Activated CD4-positive, alpha-beta T cell treated with anti-CD3 and anti-CD28 coated beads, Interleukin-2, amount 10 ng/mL, durations not matched to agents 24 days and 14 days (primary cell): ENCODE measurements at regions of chr6 and their contacts with region 1.

Region 1: DNA sequence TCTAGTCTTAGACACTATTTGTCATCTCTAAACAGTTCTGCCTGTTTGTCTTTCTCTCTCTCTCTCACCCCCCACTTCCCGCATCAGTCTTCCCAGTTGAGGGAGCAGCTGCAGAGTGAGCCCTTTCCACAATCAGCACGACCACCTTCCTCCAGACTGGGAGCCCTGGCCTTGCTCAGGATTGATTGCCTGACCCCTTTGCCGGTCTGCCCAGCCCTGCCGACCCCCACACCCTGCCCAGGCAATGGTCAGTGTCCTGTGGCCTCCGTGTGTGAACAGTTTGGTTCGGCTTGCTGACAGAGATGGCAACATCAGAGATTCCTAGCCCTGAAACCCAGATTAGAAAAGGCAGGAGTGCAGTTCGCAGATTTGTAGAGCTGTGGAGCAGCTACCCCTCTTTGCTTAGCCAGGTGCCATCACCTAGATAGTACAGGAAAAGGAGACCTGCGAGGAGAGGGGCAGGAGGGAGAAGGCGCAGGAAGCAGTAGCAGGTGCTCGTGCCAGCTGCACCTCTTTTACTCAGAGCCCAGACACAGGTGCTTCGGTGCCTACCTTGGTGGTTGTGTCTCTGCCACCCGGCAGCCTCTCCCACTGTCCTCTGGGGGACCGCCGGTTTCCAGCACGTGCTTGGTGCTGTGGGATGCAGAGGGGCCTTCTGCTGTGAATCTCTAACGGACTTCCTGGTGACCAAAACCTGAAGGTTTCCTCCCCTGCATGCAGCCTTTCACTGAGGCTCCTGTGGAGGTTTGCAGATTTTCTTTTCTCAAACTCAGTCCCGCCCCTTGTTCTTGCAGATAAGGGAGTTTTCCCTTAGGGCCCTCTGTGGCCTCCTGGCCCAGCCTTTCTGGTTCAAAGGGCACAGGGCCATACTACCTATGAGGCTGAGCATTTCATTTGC is 92.4 kb downstream of the SCML4 start:
- DNase-seq: peak; percentile 69
- H3K4me3 Mint-ChIP-seq: peak overlapping the region; percentile 88
- H3K27ac Mint-ChIP-seq: peak overlapping the region; percentile 73
- H3K4me1 Mint-ChIP-seq: peaks cover 68% of the 10 kb centered on the region
- H3K27me3 Mint-ChIP-seq: peaks cover 4% of the 10 kb centered on the region

Region 2: DNA sequence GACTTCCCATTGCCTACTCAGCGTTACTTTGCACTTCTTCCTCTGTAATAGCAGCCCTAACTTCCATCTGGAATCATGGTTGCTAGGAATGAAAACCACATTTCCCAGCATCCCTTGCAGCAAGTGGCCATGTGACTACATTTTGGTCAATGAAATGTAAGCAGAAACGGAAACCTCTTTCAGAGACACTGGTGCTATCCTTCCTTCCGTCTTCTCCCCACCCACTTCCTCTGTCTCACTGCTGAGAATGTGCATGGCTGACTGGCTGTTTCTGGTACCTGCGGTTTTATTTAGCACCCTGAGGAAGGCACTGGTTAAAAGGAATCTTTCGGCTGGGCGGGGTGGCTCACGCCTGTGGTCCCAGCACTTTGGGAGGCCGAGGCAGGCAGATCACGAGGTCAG is 15.0 kb before region 1 on chr6:
- intact Hi-C with region 1: loop called (anchors 1 kb)
- DNase-seq: peak; percentile 93
- H3K4me3 Mint-ChIP-seq: peak overlapping the region; percentile 71
- H3K27ac Mint-ChIP-seq: peak overlapping the region; percentile 85
- H3K4me1 Mint-ChIP-seq: peaks cover 52% of the 10 kb centered on the region
- H3K27me3 Mint-ChIP-seq: no peaks in the 10 kb centered on the region

Region 3: GRCh38 chr6:107786709-107787588 is 55.3 kb after region 1 on chr6:
- intact Hi-C with region 1: loop called (anchors 10 kb)
- DNase-seq: peak; percentile 86
- H3K4me3 Mint-ChIP-seq: peak overlapping the region; percentile 78
- H3K27ac Mint-ChIP-seq: peak overlapping the region; percentile 72
- H3K4me1 Mint-ChIP-seq: peaks cover 58% of the 10 kb centered on the region
- H3K27me3 Mint-ChIP-seq: no peaks in the 10 kb centered on the region

Region 4: GRCh38 chr6:107809966-107810365 is 78.3 kb after region 1 on chr6:
- intact Hi-C with region 1: no loop called
- DNase-seq: no peak
- H3K4me3 Mint-ChIP-seq: no peak overlapping the region
- H3K27ac Mint-ChIP-seq: no peak overlapping the region
- H3K4me1 Mint-ChIP-seq: peaks cover 15% of the 10 kb centered on the region
- H3K27me3 Mint-ChIP-seq: no peaks in the 10 kb centered on the region

Region 5: GRCh38 chr6:107820338-107821261 is 88.9 kb after region 1 on chr6:
- intact Hi-C with region 1: loop called (anchors 1 kb)
- DNase-seq: peak; percentile 86
- H3K4me3 Mint-ChIP-seq: peak overlapping the region; percentile 80
- H3K27ac Mint-ChIP-seq: peak overlapping the region; percentile 95
- H3K4me1 Mint-ChIP-seq: peaks cover 82% of the 10 kb centered on the region
- H3K27me3 Mint-ChIP-seq: no peaks in the 10 kb centered on the region

Region 6: DNA sequence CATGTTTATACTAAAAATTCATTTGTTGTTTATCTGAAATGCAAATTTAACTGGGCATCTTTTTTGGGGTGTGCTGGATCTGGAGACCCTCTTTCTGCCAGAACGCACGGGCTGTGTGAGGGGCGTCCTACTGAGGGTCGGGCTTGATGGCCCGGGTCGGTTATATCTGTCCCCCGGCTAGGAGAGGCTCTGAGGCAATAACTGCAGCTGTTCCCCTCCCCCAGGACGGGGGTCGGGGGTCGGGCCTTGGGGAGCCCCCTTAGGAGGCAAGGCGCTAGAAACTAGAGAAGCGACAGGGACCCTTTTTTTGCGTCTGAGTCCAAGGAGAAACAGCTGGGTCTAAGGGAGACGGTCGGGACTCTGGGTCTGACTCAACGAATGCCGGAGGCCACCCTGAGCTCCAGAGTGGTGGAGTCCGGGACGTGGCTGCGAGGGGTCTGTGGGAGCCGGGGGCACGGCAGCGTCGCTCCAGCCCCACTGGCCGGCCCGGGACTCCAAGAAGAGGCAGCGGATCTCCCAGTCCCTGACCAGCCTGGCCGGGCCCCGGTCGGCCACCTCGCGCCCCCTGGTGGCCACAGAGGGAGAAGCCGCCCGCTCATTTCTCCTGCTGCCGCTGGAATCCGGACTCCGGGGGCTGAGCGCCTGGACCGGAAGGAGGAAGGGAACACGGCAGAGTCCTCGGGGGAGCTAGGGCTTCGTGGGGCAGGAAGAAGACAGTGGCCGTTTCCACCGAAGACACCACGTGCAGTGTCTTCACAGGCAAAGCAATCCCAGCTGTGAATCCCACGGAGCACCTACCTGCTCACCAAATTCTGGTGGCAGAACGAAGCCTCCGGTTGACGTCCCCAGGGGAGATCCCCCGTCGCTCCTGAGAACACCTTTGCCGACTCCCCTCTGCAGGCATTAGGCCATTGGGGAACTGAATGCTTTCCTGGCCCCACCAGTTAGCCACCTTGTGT is 116.5 kb after region 1 on chr6:
- intact Hi-C with region 1: loop called (anchors 1 kb)
- DNase-seq: peak; percentile 95
- H3K4me3 Mint-ChIP-seq: peak overlapping the region; percentile 80
- H3K27ac Mint-ChIP-seq: peak overlapping the region; percentile 54
- H3K4me1 Mint-ChIP-seq: peaks cover 21% of the 10 kb centered on the region
- H3K27me3 Mint-ChIP-seq: peaks cover 6% of the 10 kb centered on the region

Region 7: GRCh38 chr6:107866606-107867301 is 135.1 kb after region 1 on chr6:
- intact Hi-C with region 1: loop called (anchors 2 kb)
- DNase-seq: peak; percentile 81
- H3K4me3 Mint-ChIP-seq: no peak overlapping the region
- H3K27ac Mint-ChIP-seq: no peak overlapping the region
- H3K4me1 Mint-ChIP-seq: peaks cover 16% of the 10 kb centered on the region
- H3K27me3 Mint-ChIP-seq: peaks cover 4% of the 10 kb centered on the region

Region 8: GRCh38 chr6:108383984-108384383 is 652.3 kb after region 1 on chr6:
- intact Hi-C with region 1: no loop called
- DNase-seq: no peak
- H3K4me3 Mint-ChIP-seq: no peak overlapping the region
- H3K27ac Mint-ChIP-seq: no peak overlapping the region
- H3K4me1 Mint-ChIP-seq: no peaks in the 10 kb centered on the region
- H3K27me3 Mint-ChIP-seq: no peaks in the 10 kb centered on the region